Endothelial cell of umbilical vein (primary cell): ENCODE measurements at regions of chr5 and their contacts with region 1.

Region 1: GRCh38 chr5:15105796-15106393 is 234.3 kb upstream of the ANKH start:
- DNase-seq: peak; percentile 62
- H3K4me3 ChIP-seq: no peak overlapping the region
- H3K27ac ChIP-seq: no peak overlapping the region
- H3K4me1 ChIP-seq: no peaks in the 10 kb centered on the region
- H3K27me3 ChIP-seq: peaks cover 0 to 7% of the 10 kb centered on the region in 2 experiments
- CTCF ChIP-seq: peak; percentile 77 to 79
- POLR2A ChIP-seq: no peak

Region 2: GRCh38 chr5:14534773-14535172 is 571.1 kb before region 1 on chr5:
- CTCF ChIA-PET with region 1: no interaction called
- POLR2A ChIA-PET with region 1: no interaction called
- dilution Hi-C with region 1: no loop called
- intact Hi-C with region 1: no loop called
- DNase-seq: no peak
- H3K4me3 ChIP-seq: no peak overlapping the region
- H3K27ac ChIP-seq: no peak overlapping the region
- H3K4me1 ChIP-seq: no peaks in the 10 kb centered on the region
- H3K27me3 ChIP-seq: peaks cover 0 to 8% of the 10 kb centered on the region in 2 experiments
- CTCF ChIP-seq: no peak
- POLR2A ChIP-seq: no peak

Region 3: GRCh38 chr5:15092801-15093200 is 13.1 kb before region 1 on chr5:
- CTCF ChIA-PET with region 1: interaction called, 12 read pairs
- POLR2A ChIA-PET with region 1: no interaction called
- dilution Hi-C with region 1: no loop called
- intact Hi-C with region 1: no loop called
- DNase-seq: no peak
- H3K4me3 ChIP-seq: no peak overlapping the region
- H3K27ac ChIP-seq: no peak overlapping the region
- H3K4me1 ChIP-seq: no peaks in the 10 kb centered on the region
- H3K27me3 ChIP-seq: no peaks in the 10 kb centered on the region
- CTCF ChIP-seq: no peak
- POLR2A ChIP-seq: no peak

Region 4: DNA sequence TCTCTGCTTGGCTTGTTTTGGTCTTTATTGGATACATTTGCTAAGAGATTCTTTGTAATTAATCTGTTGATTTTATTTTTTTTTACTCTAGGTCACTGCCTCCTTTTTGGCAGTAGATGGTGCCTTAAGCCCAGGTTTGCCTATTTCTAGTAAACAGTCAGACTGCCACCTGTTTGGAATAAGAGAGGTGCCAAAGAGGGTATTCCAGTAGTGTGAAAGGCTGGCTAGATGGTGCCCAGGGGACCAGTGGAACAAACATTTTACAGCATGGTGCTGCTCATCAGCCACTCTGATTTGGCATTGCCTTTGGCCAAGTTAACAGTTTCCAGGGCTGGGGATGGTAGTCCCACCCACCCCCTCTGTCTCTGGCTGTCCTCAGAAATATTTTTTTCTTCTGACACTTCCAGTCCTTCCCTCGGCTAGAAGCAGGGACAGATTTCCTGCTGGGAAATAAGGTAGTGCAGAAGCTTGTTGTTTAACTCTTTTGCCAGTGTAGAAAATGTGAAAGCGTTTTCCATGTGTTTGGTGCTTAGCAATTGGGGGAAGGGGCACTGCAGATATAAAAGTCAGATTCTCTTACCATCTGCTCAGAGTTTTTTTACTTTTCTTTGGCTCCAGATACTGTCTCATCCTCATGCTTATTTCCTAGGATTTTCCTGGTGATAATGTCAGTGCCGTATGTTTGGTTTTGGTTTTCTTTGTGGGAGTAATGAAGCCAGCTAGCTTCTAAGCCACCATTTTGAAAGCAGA is 357.5 kb after region 1 on chr5:
- CTCF ChIA-PET with region 1: no interaction called
- POLR2A ChIA-PET with region 1: no interaction called
- dilution Hi-C with region 1: no loop called
- intact Hi-C with region 1: loop called (anchors 5 kb)
- DNase-seq: peak; percentile 52
- H3K4me3 ChIP-seq: no peak overlapping the region
- H3K27ac ChIP-seq: no peak overlapping the region
- H3K4me1 ChIP-seq: no peaks in the 10 kb centered on the region
- H3K27me3 ChIP-seq: peaks cover 17 to 36% of the 10 kb centered on the region in 2 experiments
- CTCF ChIP-seq: peak; percentile 30 to 45
- POLR2A ChIP-seq: no peak

Region 5: GRCh38 chr5:15821506-15821905 is 715.6 kb after region 1 on chr5:
- CTCF ChIA-PET with region 1: interaction called, 44 read pairs
- POLR2A ChIA-PET with region 1: no interaction called
- dilution Hi-C with region 1: no loop called
- intact Hi-C with region 1: loop called (anchors 1 kb)
- DNase-seq: peak; percentile 63
- H3K4me3 ChIP-seq: no peak overlapping the region
- H3K27ac ChIP-seq: no peak overlapping the region
- H3K4me1 ChIP-seq: peaks cover 12% of the 10 kb centered on the region
- H3K27me3 ChIP-seq: no peaks in the 10 kb centered on the region
- CTCF ChIP-seq: no peak
- POLR2A ChIP-seq: no peak

Region 6: DNA sequence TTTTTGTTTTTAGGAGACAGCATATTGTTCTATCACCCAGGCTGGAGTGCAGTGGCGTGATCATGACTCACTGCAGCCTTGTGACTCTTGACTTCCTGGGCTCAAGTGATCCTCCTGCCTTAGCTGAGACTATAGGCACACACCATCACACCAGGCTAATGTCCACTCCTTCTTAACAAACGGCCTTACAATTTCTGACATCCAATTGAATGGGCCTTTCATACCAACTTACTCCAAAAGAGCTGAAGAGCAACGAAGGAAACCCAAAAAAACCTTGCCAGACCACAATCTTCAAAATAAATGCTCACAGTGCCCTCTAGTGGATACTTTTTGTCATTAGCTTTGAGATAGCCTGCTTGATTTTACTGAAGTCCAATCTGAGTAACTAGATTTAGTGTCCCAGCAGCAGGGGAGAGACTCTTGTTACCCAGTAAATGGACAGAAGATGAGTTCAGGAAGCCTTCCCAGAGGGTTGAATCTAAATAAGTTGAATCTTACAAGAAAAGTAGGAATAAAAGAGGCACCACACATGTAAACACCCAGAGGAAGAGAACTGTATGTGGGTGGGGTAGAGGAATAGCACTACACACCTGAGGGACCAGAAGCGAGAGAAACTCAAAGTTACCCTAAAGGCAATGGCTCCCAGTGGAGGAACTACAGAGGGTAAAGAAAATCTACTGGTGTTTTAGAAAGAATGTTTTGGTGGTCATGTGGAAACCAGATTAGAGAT is 1350.4 kb after region 1 on chr5:
- CTCF ChIA-PET with region 1: interaction called, 16 read pairs
- POLR2A ChIA-PET with region 1: no interaction called
- dilution Hi-C with region 1: no loop called
- intact Hi-C with region 1: no loop called
- DNase-seq: peak; percentile 75
- H3K4me3 ChIP-seq: no peak overlapping the region
- H3K27ac ChIP-seq: peak overlapping the region; percentile 85
- H3K4me1 ChIP-seq: peaks cover 12% of the 10 kb centered on the region
- H3K27me3 ChIP-seq: no peaks in the 10 kb centered on the region
- CTCF ChIP-seq: peak; percentile 56 to 65
- POLR2A ChIP-seq: no peak